ENCODE measurements at regions of chr15 and their contacts with region 1.

Region 1: DNA sequence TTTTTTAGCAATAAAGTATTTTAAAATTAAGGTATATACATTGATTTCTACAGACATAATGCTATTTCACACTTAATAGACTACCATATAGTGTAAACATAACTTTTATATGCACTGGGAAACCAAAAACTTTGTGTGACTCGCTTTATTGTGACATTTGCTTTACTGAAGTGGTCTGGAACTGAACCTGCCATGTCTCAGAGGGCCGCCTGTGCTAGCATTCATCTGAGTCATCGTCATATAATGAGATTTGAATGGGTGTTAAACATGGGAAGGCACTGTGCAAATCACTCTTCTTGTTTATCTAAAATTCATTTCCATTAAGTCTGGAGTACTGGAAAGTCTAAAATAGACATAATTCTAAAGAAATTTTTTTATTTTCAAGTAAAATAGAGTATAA is 12.9 kb downstream of the EIF2AK4 start:
- DNase-seq: no peak
- ATAC-seq: no peak
- H3K4me3 Mint-ChIP-seq: no peak overlapping the region
- H3K27ac Mint-ChIP-seq: no peak overlapping the region
- H3K4me1 Mint-ChIP-seq: peaks cover 22% of the 10 kb centered on the region
- H3K27me3 Mint-ChIP-seq: no peaks in the 10 kb centered on the region

Region 2: GRCh38 chr15:39934397-39935071 is 12.3 kb before region 1 on chr15:
- POLR2A ChIA-PET with region 1: interaction called, 17 read pairs
- DNase-seq: peak; percentile 31
- ATAC-seq: no peak
- H3K4me3 Mint-ChIP-seq: peak overlapping the region; percentile 92
- H3K27ac Mint-ChIP-seq: peak overlapping the region; percentile 77
- H3K4me1 Mint-ChIP-seq: peaks cover 28% of the 10 kb centered on the region
- H3K27me3 Mint-ChIP-seq: peaks cover 9% of the 10 kb centered on the region

Measured in activated naive CD8-positive, alpha-beta T cell treated with anti-CD3 and anti-CD28 coated beads, Interleukin-2, amount 10 ng/mL, durations not matched to agents 7 days and 5 days (primary cell).